CD14-positive monocyte (primary cell): ENCODE measurements at regions of chr6 and their contacts with region 1.

Region 1: GRCh38 chr6:63571881-63572732 is at the starts of genes LOC128125822 and PTP4A1:
- DNase-seq: peak; percentile 96 to 97 (median 96)
- H3K4me3 ChIP-seq: peak within 1 kb of the TSS; percentile 75 to 85 (median 85)
- H3K4me3 Mint-ChIP-seq: peak within 1 kb of the TSS; percentile 93
- H3K27ac ChIP-seq: peak within 1 kb of the TSS; percentile 93
- H3K27ac Mint-ChIP-seq: peak within 1 kb of the TSS; percentile 93 to 98 (median 94)
- H3K4me1 ChIP-seq: peaks cover 21 to 28% of the 10 kb centered on the region in 2 donors
- H3K4me1 Mint-ChIP-seq: peaks cover 24% of the 10 kb centered on the region
- H3K27me3 ChIP-seq: peaks cover 0 to 14% of the 10 kb centered on the region in 2 donors
- H3K27me3 Mint-ChIP-seq: peaks cover 0 to 8% (median 2%) of the 10 kb centered on the region in 3 donors
- CTCF ChIP-seq: no peak
- polyA plus RNA-seq, gene PTP4A1: 73.4 to 106 (median 96.1) TPM

Region 2: DNA sequence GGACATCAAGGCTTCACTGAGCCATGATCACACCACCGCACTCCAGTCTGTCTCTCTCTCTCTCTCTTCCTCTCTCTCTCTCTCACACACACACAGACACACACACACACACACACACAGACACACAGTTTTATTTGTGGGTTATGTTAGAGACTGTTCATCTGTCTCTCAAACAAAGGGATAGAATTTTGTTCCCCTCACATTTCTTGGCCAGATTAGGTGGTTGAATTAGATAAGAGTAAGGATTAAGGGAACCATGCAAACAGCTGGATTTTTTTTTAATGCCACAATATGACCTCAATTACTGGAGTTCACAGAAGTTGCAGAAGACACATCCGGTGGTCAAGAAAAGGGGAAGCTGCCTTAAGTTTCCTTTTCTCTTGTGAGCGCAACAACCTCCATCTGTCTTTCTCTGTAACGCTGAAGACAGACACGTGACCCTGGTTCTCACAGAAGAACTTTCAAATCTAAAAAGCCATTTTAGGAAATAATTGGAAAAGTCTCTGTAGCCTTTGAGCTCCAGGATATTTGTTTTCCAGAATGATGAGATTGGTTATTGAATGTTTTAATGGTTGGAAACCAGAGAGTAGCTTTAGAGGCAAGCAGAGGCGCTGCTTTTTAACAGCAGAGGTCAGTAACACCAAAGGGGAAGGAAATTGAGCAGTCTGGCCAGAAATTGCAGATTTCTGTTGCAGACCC is 219.4 kb before region 1 on chr6:
- intact Hi-C with region 1: loop called in 1 of 2 experiments (anchors 2 kb)
- DNase-seq: peak; percentile 88 to 95 (median 89)
- H3K4me3 ChIP-seq: peak overlapping the region; percentile 28 to 67 (median 61)
- H3K4me3 Mint-ChIP-seq: peak overlapping the region; percentile 66 to 85
- H3K27ac ChIP-seq: peak overlapping the region; percentile 74 to 84
- H3K27ac Mint-ChIP-seq: peak overlapping the region; percentile 92 to 98 (median 93)
- H3K4me1 ChIP-seq: peaks cover 25 to 37% of the 10 kb centered on the region in 2 donors
- H3K4me1 Mint-ChIP-seq: peaks cover 40% of the 10 kb centered on the region
- H3K27me3 ChIP-seq: no peaks in the 10 kb centered on the region
- H3K27me3 Mint-ChIP-seq: peaks cover 0 to 3% (median 2%) of the 10 kb centered on the region in 3 donors
- CTCF ChIP-seq: no peak

Region 3: GRCh38 chr6:63441266-63441956 is 130.7 kb before region 1 on chr6:
- intact Hi-C with region 1: no loop called
- DNase-seq: no peak
- H3K4me3 ChIP-seq: no peak overlapping the region
- H3K4me3 Mint-ChIP-seq: peak overlapping the region in 1 of 2 donors; percentile 45
- H3K27ac ChIP-seq: no peak overlapping the region
- H3K27ac Mint-ChIP-seq: peak overlapping the region in 1 of 7 donors; percentile 24
- H3K4me1 ChIP-seq: no peaks in the 10 kb centered on the region
- H3K4me1 Mint-ChIP-seq: peaks cover 2% of the 10 kb centered on the region
- H3K27me3 ChIP-seq: no peaks in the 10 kb centered on the region
- H3K27me3 Mint-ChIP-seq: peaks cover 1 to 15% (median 1%) of the 10 kb centered on the region in 3 donors
- CTCF ChIP-seq: no peak

Region 4: DNA sequence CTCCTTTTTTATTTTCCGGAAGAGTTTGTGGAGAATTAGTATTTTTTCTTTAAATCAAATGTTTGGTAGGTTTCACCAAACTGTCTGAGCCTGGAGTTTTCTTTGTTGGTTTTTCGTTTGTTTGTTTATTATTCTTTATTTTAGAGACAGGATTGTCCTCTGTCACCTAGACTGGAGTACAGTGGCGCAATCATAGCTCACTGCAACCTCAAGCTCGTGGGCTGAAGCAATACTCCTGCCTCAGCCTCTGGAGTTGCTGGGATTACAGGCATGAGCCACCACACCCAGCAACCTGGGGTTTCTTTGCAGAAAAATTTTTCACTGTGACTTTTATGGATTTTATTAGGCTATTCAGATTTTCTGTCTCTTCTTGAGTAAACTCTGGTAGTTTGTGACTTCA is 120.0 kb before region 1 on chr6:
- intact Hi-C with region 1: no loop called
- DNase-seq: no peak
- H3K4me3 ChIP-seq: no peak overlapping the region
- H3K4me3 Mint-ChIP-seq: no peak overlapping the region
- H3K27ac ChIP-seq: no peak overlapping the region
- H3K27ac Mint-ChIP-seq: no peak overlapping the region
- H3K4me1 ChIP-seq: no peaks in the 10 kb centered on the region
- H3K4me1 Mint-ChIP-seq: no peaks in the 10 kb centered on the region
- H3K27me3 ChIP-seq: no peaks in the 10 kb centered on the region
- H3K27me3 Mint-ChIP-seq: peaks cover 0 to 6% (median 0%) of the 10 kb centered on the region in 3 donors
- CTCF ChIP-seq: no peak

Region 5: GRCh38 chr6:63527658-63528514 is 44.2 kb before region 1 on chr6:
- intact Hi-C with region 1: no loop called
- DNase-seq: no peak
- H3K4me3 ChIP-seq: no peak overlapping the region
- H3K4me3 Mint-ChIP-seq: no peak overlapping the region
- H3K27ac ChIP-seq: no peak overlapping the region
- H3K27ac Mint-ChIP-seq: no peak overlapping the region
- H3K4me1 ChIP-seq: no peaks in the 10 kb centered on the region
- H3K4me1 Mint-ChIP-seq: no peaks in the 10 kb centered on the region
- H3K27me3 ChIP-seq: no peaks in the 10 kb centered on the region
- H3K27me3 Mint-ChIP-seq: peaks cover 0 to 2% (median 0%) of the 10 kb centered on the region in 3 donors
- CTCF ChIP-seq: no peak

Region 6: GRCh38 chr6:63635588-63636517 is 63.7 kb after region 1 on chr6 and contains the start of gene PHF3:
- intact Hi-C with region 1: loop called (anchors 2 to 10 kb)
- DNase-seq: peak; percentile 79 to 87 (median 83)
- H3K4me3 ChIP-seq: peak within 1 kb of the TSS; percentile 85 to 96 (median 90)
- H3K4me3 Mint-ChIP-seq: peak within 1 kb of the TSS; percentile 97 to 98
- H3K27ac ChIP-seq: peak within 1 kb of the TSS; percentile 96 to 97
- H3K27ac Mint-ChIP-seq: peak within 1 kb of the TSS; percentile 91 to 98 (median 95)
- H3K4me1 ChIP-seq: peaks cover 25 to 56% of the 10 kb centered on the region in 2 donors
- H3K4me1 Mint-ChIP-seq: peaks cover 54% of the 10 kb centered on the region
- H3K27me3 ChIP-seq: no peaks in the 10 kb centered on the region
- H3K27me3 Mint-ChIP-seq: peaks cover 0 to 2% (median 0%) of the 10 kb centered on the region in 3 donors
- CTCF ChIP-seq: no peak
- polyA plus RNA-seq, gene PHF3: 5.4 to 13.8 (median 13.0) TPM

Region 7: DNA sequence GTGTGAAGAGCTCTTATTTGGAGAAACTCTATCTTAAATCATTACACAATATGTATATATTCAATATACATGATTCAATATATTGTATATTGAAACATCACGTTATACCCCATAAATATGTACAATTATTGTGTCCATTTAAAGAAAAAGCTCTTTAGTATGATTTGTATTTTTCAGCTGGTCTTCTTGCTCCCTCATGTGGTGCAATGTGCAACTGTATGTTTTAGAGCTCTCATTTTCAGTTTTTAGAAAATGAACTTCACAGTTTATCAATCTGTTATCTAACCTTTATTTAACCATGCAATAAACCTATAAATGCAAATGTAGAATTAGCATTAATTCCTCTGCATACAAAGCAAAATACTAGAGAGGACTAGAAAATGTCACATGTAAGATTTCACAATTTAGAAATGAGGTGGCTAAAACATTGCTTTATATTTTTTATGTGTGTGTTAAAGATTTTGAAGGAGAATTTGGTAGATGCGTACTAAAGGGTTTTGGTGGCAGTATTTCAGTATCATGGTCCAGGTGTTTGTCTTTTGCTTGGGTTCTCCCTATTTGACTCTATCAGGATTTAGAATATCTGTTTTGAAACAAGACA is 230.6 kb after region 1 on chr6:
- intact Hi-C with region 1: loop called in 1 of 2 experiments (anchors 2 kb)
- DNase-seq: peak; percentile 16 to 41 (median 23)
- H3K4me3 ChIP-seq: no peak overlapping the region
- H3K4me3 Mint-ChIP-seq: no peak overlapping the region
- H3K27ac ChIP-seq: no peak overlapping the region
- H3K27ac Mint-ChIP-seq: peak overlapping the region in 1 of 7 donors; percentile 32
- H3K4me1 ChIP-seq: peaks cover 35 to 41% of the 10 kb centered on the region in 2 donors
- H3K4me1 Mint-ChIP-seq: peaks cover 52% of the 10 kb centered on the region
- H3K27me3 ChIP-seq: no peaks in the 10 kb centered on the region
- H3K27me3 Mint-ChIP-seq: no peaks in the 10 kb centered on the region
- CTCF ChIP-seq: peak; percentile 81

Region 8: GRCh38 chr6:63887002-63887751 is 315.1 kb after region 1 on chr6:
- intact Hi-C with region 1: no loop called
- DNase-seq: no peak
- H3K4me3 ChIP-seq: no peak overlapping the region
- H3K4me3 Mint-ChIP-seq: no peak overlapping the region
- H3K27ac ChIP-seq: no peak overlapping the region
- H3K27ac Mint-ChIP-seq: no peak overlapping the region
- H3K4me1 ChIP-seq: no peaks in the 10 kb centered on the region
- H3K4me1 Mint-ChIP-seq: no peaks in the 10 kb centered on the region
- H3K27me3 ChIP-seq: no peaks in the 10 kb centered on the region
- H3K27me3 Mint-ChIP-seq: peaks cover 0 to 3% (median 0%) of the 10 kb centered on the region in 3 donors
- CTCF ChIP-seq: no peak